Heart left ventricle (tissue), 16 donors: ENCODE measurements at regions of chr20 and their contacts with region 1.

Region 1: GRCh38 chr20:20410678-20411077 is 42.8 kb downstream of the INSM1 start:
- DNase-seq: peak; percentile 36 to 71 (median 64)
- ATAC-seq: peak; percentile 83 to 96 (median 92)
- H3K4me3 ChIP-seq: no peak overlapping the region
- H3K27ac ChIP-seq: no peak overlapping the region
- H3K4me1 ChIP-seq: peaks cover 0 to 23% (median 7%) of the 10 kb centered on the region in 12 donors
- H3K27me3 ChIP-seq: no peaks in the 10 kb centered on the region
- CTCF ChIP-seq: no peak
- POLR2A ChIP-seq: no peak

Region 2: DNA sequence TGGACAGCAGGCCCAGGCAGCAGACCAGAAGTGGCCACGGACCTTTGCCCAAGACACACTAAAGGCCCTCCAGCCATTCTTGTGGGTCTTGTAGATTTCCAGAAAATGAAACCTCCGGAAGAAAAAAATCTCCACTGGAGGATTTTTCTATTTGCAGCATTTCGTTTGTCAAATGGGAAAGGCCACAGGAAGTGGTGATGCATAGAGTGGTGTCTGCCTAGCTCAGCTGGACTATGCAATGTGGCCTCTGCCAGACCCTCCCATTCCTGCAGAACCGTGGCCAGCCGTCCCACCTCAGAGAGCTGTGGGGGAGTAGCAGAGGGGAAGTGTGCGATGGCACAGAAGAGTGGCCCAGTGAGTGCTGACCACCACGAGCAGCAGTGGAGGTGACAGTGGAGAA is 66.7 kb before region 1 on chr20:
- intact Hi-C with region 1: loop called in 1 of 10 experiments (anchors 10 kb)
- DNase-seq: no peak
- ATAC-seq: no peak
- H3K4me3 ChIP-seq: no peak overlapping the region
- H3K27ac ChIP-seq: no peak overlapping the region
- H3K4me1 ChIP-seq: no peaks in the 10 kb centered on the region
- H3K27me3 ChIP-seq: no peaks in the 10 kb centered on the region
- CTCF ChIP-seq: no peak
- POLR2A ChIP-seq: no peak

Region 3: DNA sequence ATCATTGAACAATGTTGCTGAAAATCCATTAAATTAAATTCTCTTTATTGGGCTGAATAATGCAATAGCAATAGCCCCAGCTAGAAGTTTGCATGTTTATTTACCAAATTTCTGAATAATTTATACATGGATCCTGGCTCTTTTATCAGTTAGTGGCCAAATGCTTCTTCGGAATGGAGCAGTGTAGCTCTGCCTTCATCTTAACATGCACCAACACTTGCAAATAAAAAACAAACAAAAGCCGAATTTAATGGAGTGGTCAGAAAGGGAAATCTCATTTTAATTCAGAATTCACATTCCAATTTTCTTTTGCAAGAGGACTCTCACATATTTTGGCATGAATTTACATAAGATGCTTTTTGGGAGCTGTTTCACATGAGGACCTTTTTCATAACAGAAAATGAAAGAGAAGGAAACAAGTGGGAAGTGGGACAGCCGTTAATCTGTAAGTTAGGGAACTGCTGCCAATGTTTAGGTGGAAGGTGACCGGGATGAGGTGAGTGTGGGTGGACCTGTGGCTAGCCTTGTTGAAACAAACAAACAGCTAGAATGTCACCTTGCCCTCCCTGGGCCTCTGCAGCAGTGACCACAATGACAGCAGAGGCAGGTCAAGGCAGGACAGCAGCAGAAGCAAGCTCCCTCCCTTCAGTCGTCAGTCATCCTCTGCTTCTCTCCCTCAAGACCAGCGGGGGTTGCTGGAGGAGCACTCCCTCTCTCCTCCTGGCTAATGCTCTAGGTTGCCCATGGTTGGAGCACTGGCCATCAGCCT is 30.4 kb after region 1 on chr20:
- intact Hi-C with region 1: no loop called
- DNase-seq: no peak
- ATAC-seq: peak; percentile 20 to 73 (median 56)
- H3K4me3 ChIP-seq: no peak overlapping the region
- H3K27ac ChIP-seq: no peak overlapping the region
- H3K4me1 ChIP-seq: peaks cover 0 to 13% (median 5%) of the 10 kb centered on the region in 12 donors
- H3K27me3 ChIP-seq: no peaks in the 10 kb centered on the region
- CTCF ChIP-seq: no peak
- POLR2A ChIP-seq: no peak